Heart left ventricle (tissue), 16 donors: ENCODE measurements at regions of chr19 and their contacts with region 1.

Region 1: DNA sequence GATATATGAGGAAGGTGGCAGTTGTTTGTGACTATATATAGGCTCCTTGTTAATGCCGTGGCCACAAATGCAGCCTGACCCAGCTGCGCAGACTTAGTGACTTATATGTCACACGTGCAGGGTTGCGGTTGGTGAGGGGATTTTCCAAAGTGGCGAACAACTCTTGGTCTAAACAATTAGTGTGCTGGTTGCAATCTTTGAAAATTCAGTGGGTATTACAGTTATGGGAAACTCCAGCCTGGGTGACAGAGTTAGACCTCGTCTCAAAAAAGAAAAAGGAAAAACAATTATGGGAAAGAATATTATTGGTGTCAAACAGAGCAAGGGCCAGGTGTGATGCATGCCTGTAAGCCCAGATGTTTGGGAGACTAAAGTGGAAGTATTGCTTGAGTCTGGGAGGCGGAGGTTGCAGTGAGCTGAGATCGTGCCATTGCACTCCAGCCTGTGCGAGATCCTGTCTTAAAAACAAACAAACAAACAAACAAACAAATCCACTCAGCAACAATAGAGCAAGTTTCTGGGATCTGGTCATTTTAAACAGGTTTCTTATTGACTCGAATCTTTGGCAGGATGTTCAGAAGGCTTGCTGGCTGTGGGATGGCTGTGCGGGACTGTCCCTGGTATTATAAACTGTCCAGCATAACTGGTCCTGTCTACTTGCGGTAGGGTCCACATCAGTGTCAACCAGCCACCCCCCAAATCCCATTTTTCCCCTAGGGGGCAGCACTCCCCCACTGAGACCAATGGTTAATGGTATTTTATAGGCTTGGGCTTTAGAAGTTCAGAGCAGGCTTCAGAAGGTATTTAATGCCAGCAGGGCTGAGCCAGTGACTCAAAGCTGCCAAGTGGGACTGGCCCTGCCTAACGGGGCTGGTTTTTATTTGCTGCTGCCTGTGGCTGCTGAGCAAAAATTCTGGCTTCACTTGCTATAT is 15.4 kb downstream of the RELB start:
- DNase-seq: peak in 4 of 5 donors; percentile 40 to 48 (median 42)
- ATAC-seq: peak; percentile 71 to 90 (median 82)
- H3K4me3 ChIP-seq: no peak overlapping the region
- H3K27ac ChIP-seq: peak overlapping the region in 2 of 12 donors; percentile 17 to 39
- H3K4me1 ChIP-seq: peaks cover 0 to 9% (median 0%) of the 10 kb centered on the region in 12 donors
- H3K27me3 ChIP-seq: no peaks in the 10 kb centered on the region
- CTCF ChIP-seq: peak; percentile 52 to 71 (median 62)
- POLR2A ChIP-seq: no peak

Region 2: GRCh38 chr19:44972802-44973201 is 43.9 kb before region 1 on chr19:
- intact Hi-C with region 1: no loop called
- DNase-seq: no peak
- ATAC-seq: no peak
- H3K4me3 ChIP-seq: no peak overlapping the region
- H3K27ac ChIP-seq: no peak overlapping the region
- H3K4me1 ChIP-seq: no peaks in the 10 kb centered on the region
- H3K27me3 ChIP-seq: no peaks in the 10 kb centered on the region
- CTCF ChIP-seq: no peak
- POLR2A ChIP-seq: no peak

Region 3: GRCh38 chr19:45001087-45001739 is 15.4 kb before region 1 on chr19 and contains the start of gene RELB:
- intact Hi-C with region 1: no loop called
- DNase-seq: peak; percentile 96 to 98 (median 97)
- ATAC-seq: peak; percentile 28 to 71 (median 62)
- H3K4me3 ChIP-seq: peak within 1 kb of the TSS; percentile 52 to 95 (median 88)
- H3K27ac ChIP-seq: peak within 1 kb of the TSS; percentile 88 to 100 (median 98)
- H3K4me1 ChIP-seq: peaks cover 0 to 14% (median 10%) of the 10 kb centered on the region in 12 donors
- H3K27me3 ChIP-seq: no peaks in the 10 kb centered on the region
- CTCF ChIP-seq: no peak
- POLR2A ChIP-seq: no peak
- total RNA-seq, gene RELB: 2.8 to 23.2 (median 6.7) TPM

Region 4: DNA sequence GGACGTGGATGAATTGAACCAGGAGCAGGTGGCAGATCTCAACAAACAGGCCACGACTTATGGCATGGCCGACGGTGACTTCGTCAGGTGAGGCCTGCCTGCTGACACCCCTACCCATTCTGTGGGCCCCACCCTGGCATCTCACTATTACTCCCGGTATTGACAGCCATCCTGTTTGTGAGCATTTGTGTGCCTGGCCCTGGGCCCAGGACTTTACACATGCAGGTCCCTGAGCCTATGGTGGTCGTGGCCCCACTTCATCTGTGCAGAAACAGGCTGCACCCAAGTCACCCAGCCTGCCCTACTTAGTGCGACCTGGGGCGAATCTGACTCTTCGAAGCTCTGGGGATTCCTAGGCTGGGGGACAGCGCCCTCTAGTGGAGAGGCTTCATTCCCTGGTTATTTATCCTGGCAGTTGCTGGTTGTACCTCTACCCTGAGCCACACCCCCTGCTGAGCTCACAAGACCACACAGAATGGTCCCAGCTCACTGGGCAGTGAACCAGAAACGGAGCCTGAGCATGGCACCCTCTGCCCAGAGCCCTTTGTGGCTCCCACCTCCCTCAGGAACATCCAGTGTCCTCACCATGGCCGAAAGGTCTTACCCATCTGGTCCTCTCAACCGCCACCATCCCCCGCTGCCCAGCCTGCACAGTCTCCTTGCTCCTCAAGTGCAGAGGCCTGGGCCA is 42.8 kb after region 1 on chr19:
- intact Hi-C with region 1: no loop called
- DNase-seq: peak; percentile 60 to 81 (median 67)
- ATAC-seq: peak; percentile 45 to 78 (median 69)
- H3K4me3 ChIP-seq: no peak overlapping the region
- H3K27ac ChIP-seq: no peak overlapping the region
- H3K4me1 ChIP-seq: no peaks in the 10 kb centered on the region
- H3K27me3 ChIP-seq: no peaks in the 10 kb centered on the region
- CTCF ChIP-seq: peak; percentile 69 to 91 (median 83)
- POLR2A ChIP-seq: no peak

Region 5: DNA sequence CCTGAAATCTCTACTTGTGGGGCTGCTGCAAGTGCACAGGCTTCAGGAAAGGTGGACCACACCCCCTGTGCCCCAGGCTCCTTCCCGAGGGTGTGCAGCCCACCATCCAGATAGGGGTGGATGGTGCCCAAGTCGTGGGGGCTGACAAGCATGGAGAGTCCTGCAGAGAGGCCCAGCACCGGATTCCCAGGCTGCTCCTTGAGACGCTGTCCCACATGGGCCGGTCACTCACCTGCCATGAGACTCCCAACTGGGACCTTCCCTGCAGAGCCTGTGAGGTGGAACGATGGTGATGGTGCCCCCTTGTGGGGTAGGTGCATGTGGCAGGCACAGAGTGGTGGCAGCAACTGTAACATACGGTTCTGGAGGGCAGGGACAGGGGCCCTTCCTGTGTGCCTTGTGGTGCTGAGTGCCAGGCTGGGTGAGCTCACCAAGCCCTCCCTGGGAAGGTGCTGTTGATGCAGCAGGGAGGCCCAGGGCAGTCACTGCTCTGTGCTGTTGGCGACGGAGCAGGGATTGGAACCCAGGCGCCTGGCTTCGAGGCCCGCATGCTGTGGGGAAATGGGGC is 109.4 kb after region 1 on chr19:
- intact Hi-C with region 1: loop called in 1 of 10 experiments (anchors 5 kb)
- DNase-seq: peak in 4 of 5 donors; percentile 37 to 66 (median 44)
- ATAC-seq: peak; percentile 38 to 79 (median 70)
- H3K4me3 ChIP-seq: no peak overlapping the region
- H3K27ac ChIP-seq: no peak overlapping the region
- H3K4me1 ChIP-seq: peaks cover 0 to 7% (median 0%) of the 10 kb centered on the region in 12 donors
- H3K27me3 ChIP-seq: no peaks in the 10 kb centered on the region
- CTCF ChIP-seq: peak; percentile 48 to 73 (median 57)
- POLR2A ChIP-seq: no peak

Region 6: GRCh38 chr19:45187421-45188100 is 170.9 kb after region 1 on chr19:
- intact Hi-C with region 1: loop called in 1 of 10 experiments (anchors 10 kb)
- DNase-seq: peak in 1 of 5 donors; percentile 35
- ATAC-seq: peak in 2 of 4 donors; percentile 42 to 45
- H3K4me3 ChIP-seq: no peak overlapping the region
- H3K27ac ChIP-seq: no peak overlapping the region
- H3K4me1 ChIP-seq: peaks cover 0 to 16% (median 0%) of the 10 kb centered on the region in 12 donors
- H3K27me3 ChIP-seq: no peaks in the 10 kb centered on the region
- CTCF ChIP-seq: peak; percentile 34 to 63 (median 54)
- POLR2A ChIP-seq: no peak

Region 7: DNA sequence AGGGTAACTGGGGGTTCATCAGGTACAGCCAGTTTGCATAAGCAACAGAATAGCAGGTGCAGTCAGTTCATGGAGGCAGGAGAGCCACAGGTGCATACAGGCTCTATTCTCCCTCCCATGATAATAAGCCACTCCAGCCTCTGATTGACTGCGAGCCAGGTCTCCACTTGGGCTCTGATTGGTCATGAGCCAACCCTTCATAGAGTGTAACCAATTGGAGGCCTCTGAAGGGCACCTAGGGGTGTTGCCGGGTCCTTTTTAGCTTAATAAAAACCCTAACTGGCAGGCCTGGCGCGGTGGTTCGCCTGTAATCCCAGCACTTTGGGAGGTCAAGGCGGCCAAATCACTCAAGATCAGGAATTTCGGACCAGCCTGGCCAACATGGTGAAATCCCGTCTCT is 314.8 kb after region 1 on chr19:
- intact Hi-C with region 1: loop called in 1 of 10 experiments (anchors 10 kb)
- DNase-seq: no peak
- ATAC-seq: no peak
- H3K4me3 ChIP-seq: no peak overlapping the region
- H3K27ac ChIP-seq: no peak overlapping the region
- H3K4me1 ChIP-seq: peaks cover 0 to 2% (median 0%) of the 10 kb centered on the region in 12 donors
- H3K27me3 ChIP-seq: no peaks in the 10 kb centered on the region
- CTCF ChIP-seq: no peak
- POLR2A ChIP-seq: no peak